SK-N-SH (cell line): ENCODE measurements at regions of chr4 and their contacts with region 1.

Region 1: DNA sequence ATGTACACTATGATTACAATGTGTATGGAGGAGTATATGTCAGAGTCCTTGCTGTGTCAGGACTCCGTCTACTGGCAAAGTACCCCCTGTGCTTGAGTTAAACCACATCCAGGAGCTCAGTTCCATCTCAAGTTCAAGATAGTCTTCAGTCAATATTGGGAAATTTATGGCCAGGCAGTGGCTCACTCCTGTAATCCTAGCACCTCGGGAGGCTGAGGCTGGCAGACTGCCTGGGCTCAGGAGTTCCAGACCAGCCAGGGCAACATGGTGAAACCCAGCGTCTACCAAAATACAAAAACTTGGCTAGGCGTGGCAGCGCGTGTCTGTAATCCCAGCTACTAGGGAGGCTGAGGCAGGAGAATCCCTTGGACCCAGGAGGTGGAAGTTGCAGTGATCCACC is 5.8 kb downstream of the SLBP start:
- DNase-seq: no peak
- H3K4me3 ChIP-seq: no peak overlapping the region
- H3K27ac ChIP-seq: no peak overlapping the region
- H3K4me1 ChIP-seq: peaks cover 8 to 18% of the 10 kb centered on the region in 2 experiments; a peak in 2 of 4 replicates
- H3K27me3 ChIP-seq: no peaks in the 10 kb centered on the region
- CTCF ChIP-seq: no peak
- EP300 ChIP-seq: no peak
- RAD21 ChIP-seq: no peak

Region 2: DNA sequence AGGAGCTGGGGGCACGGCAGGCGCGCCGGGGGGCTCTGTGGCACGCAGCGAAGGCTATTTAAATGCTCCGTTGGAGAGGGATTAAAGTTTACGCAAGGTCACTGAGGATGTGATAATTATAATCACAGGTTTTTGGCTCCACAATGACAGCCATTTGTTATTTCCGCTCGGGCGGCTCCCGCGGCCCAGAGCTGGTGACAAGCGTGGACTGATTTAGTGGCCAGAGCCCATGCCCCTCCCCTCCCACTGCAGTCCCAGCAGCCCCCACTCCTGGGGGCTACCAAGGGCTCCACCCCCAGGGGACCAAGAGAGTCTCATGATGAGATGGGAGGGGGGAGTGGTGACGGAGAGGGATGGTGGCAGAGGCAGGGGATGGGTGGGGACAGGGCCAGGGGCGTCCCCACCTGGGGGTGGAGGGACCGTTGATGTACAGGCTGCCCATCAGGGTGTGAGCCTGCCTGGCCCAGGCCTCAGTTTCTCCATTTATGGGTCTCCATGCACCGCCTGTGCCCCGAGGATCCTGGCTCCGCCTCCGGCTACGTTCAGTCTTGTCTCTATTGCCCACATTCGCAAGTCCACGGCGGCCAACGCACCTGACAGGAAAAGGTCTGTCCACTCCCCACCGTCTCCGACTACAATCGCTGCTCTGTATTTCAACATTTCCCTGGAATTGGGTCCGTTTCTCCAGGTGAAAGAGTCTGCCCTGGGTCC is 204.0 kb before region 1 on chr4:
- CTCF ChIA-PET with region 1: no interaction called
- POLR2A ChIA-PET with region 1: no interaction called
- DNase-seq: no peak
- H3K4me3 ChIP-seq: no peak overlapping the region
- H3K27ac ChIP-seq: no peak overlapping the region
- H3K4me1 ChIP-seq: no peaks in the 10 kb centered on the region
- H3K27me3 ChIP-seq: peaks cover 35% of the 10 kb centered on the region
- CTCF ChIP-seq: no peak
- EP300 ChIP-seq: no peak
- RAD21 ChIP-seq: no peak

Region 3: DNA sequence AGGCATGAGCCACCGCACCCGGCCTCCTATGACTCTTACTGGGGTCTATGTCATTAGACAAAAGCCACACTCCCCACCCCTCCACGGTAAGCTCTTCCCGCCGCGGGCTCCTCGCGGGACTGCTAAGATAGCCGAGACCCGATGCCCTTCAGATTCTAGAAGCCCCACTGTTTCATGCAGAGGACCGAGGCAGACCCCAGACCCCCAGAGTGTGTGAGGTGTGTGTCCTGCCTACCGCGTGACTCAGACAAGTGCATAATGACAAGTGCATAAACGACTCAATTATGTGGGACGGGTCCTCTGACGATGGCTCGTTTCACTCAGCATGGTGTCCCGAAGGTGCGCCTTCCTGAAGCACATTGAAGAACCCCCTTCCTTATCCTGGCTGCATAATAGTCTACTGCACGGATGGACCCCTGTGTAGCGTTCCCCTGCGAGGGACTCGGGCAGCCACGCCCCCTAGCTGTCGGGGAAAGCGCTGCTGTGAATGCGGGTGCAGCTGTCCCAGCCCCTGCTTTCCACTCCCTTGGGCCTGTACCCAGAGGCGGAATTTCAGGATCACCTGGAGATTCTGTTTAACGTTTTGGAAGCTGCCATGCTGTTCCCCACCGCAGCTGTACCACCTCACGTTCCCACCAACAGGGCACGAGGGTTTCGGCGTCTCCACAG is 99.9 kb before region 1 on chr4:
- CTCF ChIA-PET with region 1: no interaction called
- POLR2A ChIA-PET with region 1: no interaction called
- DNase-seq: no peak
- H3K4me3 ChIP-seq: no peak overlapping the region
- H3K27ac ChIP-seq: no peak overlapping the region
- H3K4me1 ChIP-seq: no peaks in the 10 kb centered on the region; a peak in 1 of 4 replicates
- H3K27me3 ChIP-seq: no peaks in the 10 kb centered on the region
- CTCF ChIP-seq: peak; percentile 36
- EP300 ChIP-seq: no peak
- RAD21 ChIP-seq: no peak

Region 4: GRCh38 chr4:1726146-1726934 is 20.0 kb after region 1 on chr4:
- CTCF ChIA-PET with region 1: interaction called, 11 read pairs
- POLR2A ChIA-PET with region 1: interaction called, 16 read pairs
- DNase-seq: peak; percentile 89
- H3K4me3 ChIP-seq: peak overlapping the region in 1 of 2 experiments; percentile 22; a peak in 1 of 4 replicates
- H3K27ac ChIP-seq: peak overlapping the region; percentile 73 to 82
- H3K4me1 ChIP-seq: peaks cover 26 to 28% of the 10 kb centered on the region in 2 experiments; a peak in 3 of 4 replicates
- H3K27me3 ChIP-seq: no peaks in the 10 kb centered on the region
- CTCF ChIP-seq: peak; percentile 97
- EP300 ChIP-seq: no peak
- RAD21 ChIP-seq: peak; percentile 82